Gastrocnemius medialis (tissue), 4 donors: ENCODE measurements at regions of chr3 and their contacts with region 1.

Region 1: GRCh38 chr3:183988216-183988790 is 29.4 kb downstream of the ABCC5 start:
- DNase-seq: peak in 1 of 2 donors; percentile 45
- ATAC-seq: peak; percentile 38 to 66
- H3K4me3 ChIP-seq: no peak overlapping the region
- H3K27ac ChIP-seq: peak overlapping the region; percentile 75 to 89 (median 84)
- H3K4me1 ChIP-seq: peaks cover 37 to 38% of the 10 kb centered on the region in 2 donors
- H3K27me3 ChIP-seq: no peaks in the 10 kb centered on the region
- CTCF ChIP-seq: no peak
- POLR2A ChIP-seq: no peak

Region 2: GRCh38 chr3:183937610-183938230 is 50.6 kb before region 1 on chr3:
- in situ Hi-C with region 1: no loop called
- intact Hi-C with region 1: loop called (anchors 10 kb)
- DNase-seq: no peak
- ATAC-seq: no peak
- H3K4me3 ChIP-seq: no peak overlapping the region
- H3K27ac ChIP-seq: peak overlapping the region in 2 of 4 donors; percentile 3 to 47
- H3K4me1 ChIP-seq: no peaks in the 10 kb centered on the region
- H3K27me3 ChIP-seq: no peaks in the 10 kb centered on the region
- CTCF ChIP-seq: no peak
- POLR2A ChIP-seq: no peak

Region 3: DNA sequence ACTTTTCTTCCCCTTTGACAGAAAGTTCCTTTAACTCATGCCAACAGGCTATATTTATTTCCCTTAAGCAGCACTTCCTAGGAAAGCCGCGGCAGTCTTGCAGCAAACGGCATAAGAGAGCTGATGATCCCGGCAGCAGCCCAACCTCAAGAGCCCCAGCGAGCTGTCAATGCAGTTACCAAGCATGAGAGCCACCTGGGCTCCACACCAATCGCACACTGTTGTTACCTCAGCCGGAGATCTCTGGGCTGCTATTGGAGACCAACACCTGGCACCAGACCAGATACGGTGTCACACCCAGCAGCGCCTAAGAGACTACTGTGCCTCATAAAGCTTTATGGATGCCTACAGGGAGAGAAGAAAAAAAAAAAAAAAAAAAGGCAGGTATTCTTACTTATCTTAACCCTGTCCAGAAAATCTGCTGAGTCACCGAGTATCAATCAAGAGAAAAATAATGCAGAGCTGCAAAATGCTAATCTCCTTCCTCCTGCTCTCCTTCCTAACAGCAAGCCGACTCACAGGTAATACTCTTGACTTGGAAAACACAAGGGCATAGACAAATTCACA is 17.7 kb after region 1 on chr3:
- in situ Hi-C with region 1: no loop called
- intact Hi-C with region 1: loop called (anchors 1 kb)
- DNase-seq: peak; percentile 84 to 90
- ATAC-seq: peak; percentile 84 to 85
- H3K4me3 ChIP-seq: peak overlapping the region in 3 of 4 donors; percentile 5 to 34 (median 33)
- H3K27ac ChIP-seq: peak overlapping the region; percentile 84 to 88 (median 86)
- H3K4me1 ChIP-seq: peaks cover 62 to 64% of the 10 kb centered on the region in 2 donors
- H3K27me3 ChIP-seq: no peaks in the 10 kb centered on the region
- CTCF ChIP-seq: no peak
- POLR2A ChIP-seq: peak; percentile 17 to 47

Region 4: GRCh38 chr3:184314363-184314699 is 326.0 kb after region 1 on chr3 and contains the start of gene EIF4G1:
- in situ Hi-C with region 1: no loop called
- intact Hi-C with region 1: no loop called
- DNase-seq: peak; percentile 94
- ATAC-seq: peak; percentile 76 to 84
- H3K4me3 ChIP-seq: peak within 1 kb of the TSS; percentile 73 to 94 (median 90)
- H3K27ac ChIP-seq: peak within 1 kb of the TSS; percentile 92 to 100 (median 98)
- H3K4me1 ChIP-seq: peaks cover 38 to 45% of the 10 kb centered on the region in 2 donors
- H3K27me3 ChIP-seq: no peaks in the 10 kb centered on the region
- CTCF ChIP-seq: no peak
- POLR2A ChIP-seq: peak; percentile 66 to 74
- total RNA-seq, gene EIF4G1: 474 to 863 (median 735) TPM

Region 5: GRCh38 chr3:184380191-184380626 is 391.9 kb after region 1 on chr3:
- in situ Hi-C with region 1: no loop called
- intact Hi-C with region 1: no loop called
- DNase-seq: peak; percentile 63 to 71
- ATAC-seq: peak; percentile 79 to 80
- H3K4me3 ChIP-seq: peak overlapping the region; percentile 45 to 61 (median 54)
- H3K27ac ChIP-seq: peak overlapping the region in 3 of 4 donors; percentile 71 to 78 (median 77)
- H3K4me1 ChIP-seq: peaks cover 19 to 23% of the 10 kb centered on the region in 2 donors
- H3K27me3 ChIP-seq: peaks cover 4 to 15% (median 5%) of the 10 kb centered on the region in 3 donors
- CTCF ChIP-seq: no peak
- POLR2A ChIP-seq: no peak

Region 6: DNA sequence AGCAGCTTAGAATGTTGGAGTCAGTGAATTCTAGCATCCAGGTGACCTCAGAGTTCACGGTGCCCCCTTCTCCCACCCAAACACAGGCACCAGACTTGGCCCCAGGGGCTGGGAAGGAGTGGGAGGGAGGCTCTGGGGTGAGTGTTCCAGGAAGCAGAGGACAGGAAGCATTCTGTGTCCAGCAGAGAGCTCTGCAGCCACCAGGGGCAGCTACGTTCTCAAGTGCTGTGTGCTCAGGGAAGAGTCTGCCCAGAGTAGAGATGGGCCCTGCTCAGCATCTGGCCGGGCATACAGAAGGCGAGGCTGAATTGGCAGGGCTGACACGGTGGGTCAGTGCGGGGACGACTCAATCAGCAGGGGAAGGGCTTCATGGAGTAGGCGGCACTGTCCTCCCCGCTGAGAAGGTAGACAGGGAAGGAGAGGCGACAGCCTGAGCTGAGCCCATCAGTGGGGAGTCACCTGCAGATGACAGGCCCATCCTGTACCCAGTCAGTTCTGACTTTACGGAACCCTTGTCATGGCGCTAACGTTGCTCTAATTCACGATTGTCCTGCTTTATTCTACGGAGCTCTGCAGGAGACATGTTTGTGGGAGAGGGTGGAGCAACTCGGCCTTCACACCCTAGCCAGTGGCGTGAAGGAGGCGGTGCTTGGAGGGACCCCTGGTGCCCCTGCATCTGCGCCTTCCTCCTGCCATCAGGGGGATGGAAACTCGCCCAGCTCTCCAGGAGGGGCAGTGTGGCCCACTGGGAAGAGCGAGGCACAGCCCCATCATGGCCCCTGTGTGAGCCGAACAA is 1082.4 kb after region 1 on chr3:
- in situ Hi-C with region 1: no loop called
- intact Hi-C with region 1: no loop called
- DNase-seq: no peak
- ATAC-seq: no peak
- H3K4me3 ChIP-seq: no peak overlapping the region
- H3K27ac ChIP-seq: no peak overlapping the region
- H3K4me1 ChIP-seq: no peaks in the 10 kb centered on the region
- H3K27me3 ChIP-seq: no peaks in the 10 kb centered on the region
- CTCF ChIP-seq: peak in 1 of 5 experiments; percentile 8
- POLR2A ChIP-seq: no peak